A549 (cell line): ENCODE measurements at regions of chr15 and their contacts with region 1.

Region 1: GRCh38 chr15:99275525-99276128 is 24.3 kb downstream of the LRRC28 start:
- DNase-seq: no peak
- ATAC-seq: no peak
- H3K4me3 ChIP-seq: no peak overlapping the region
- H3K27ac ChIP-seq: no peak overlapping the region
- H3K4me1 ChIP-seq: no peaks in the 10 kb centered on the region
- CTCF ChIP-seq: no peak
- EP300 ChIP-seq: no peak
- POLR2A ChIP-seq: no peak
- RAD21 ChIP-seq: no peak

Region 2: GRCh38 chr15:99250494-99251435 is 24.9 kb before region 1 on chr15:
- CTCF ChIA-PET with region 1: interaction called, 21 read pairs
- POLR2A ChIA-PET with region 1: no interaction called
- DNase-seq: peak; percentile 92 to 99
- ATAC-seq: peak; percentile 91 to 96
- H3K4me3 ChIP-seq: peak overlapping the region; percentile 76
- H3K27ac ChIP-seq: peak overlapping the region; percentile 91
- H3K4me1 ChIP-seq: peaks cover 15% of the 10 kb centered on the region; the same call in 2 of the 3 replicates
- CTCF ChIP-seq: no peak
- EP300 ChIP-seq: no peak
- POLR2A ChIP-seq: peak; percentile 62
- RAD21 ChIP-seq: no peak

Region 3: DNA sequence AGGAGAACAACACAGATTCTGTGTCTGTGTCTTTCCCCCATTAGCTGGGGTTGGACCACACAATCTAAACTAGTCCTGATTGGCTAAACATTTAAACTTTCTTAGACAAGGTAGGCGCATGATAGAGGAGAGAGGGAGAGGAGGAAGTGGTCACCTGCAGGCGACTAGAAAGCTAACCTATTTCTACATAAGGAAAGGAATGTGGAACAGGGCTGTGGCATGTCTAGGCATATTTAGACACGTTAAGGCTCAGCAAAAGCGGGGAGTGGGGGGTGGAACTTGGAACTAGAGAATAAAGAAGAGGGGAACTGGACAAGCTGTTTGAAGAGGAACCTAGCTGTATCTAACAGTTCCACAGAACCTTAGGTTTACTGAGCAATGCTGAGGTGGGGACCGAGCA is 11.5 kb before region 1 on chr15:
- CTCF ChIA-PET with region 1: interaction called, 45 read pairs
- POLR2A ChIA-PET with region 1: no interaction called
- DNase-seq: no peak
- ATAC-seq: no peak
- H3K4me3 ChIP-seq: no peak overlapping the region
- H3K27ac ChIP-seq: no peak overlapping the region
- H3K4me1 ChIP-seq: no peaks in the 10 kb centered on the region
- CTCF ChIP-seq: no peak
- EP300 ChIP-seq: no peak
- POLR2A ChIP-seq: no peak
- RAD21 ChIP-seq: no peak

Region 4: GRCh38 chr15:99409097-99409473 is 133.5 kb after region 1 on chr15:
- CTCF ChIA-PET with region 1: interaction called, 16 read pairs
- POLR2A ChIA-PET with region 1: no interaction called
- DNase-seq: peak; percentile 75 to 76
- ATAC-seq: peak; percentile 93 to 95
- H3K4me3 ChIP-seq: no peak overlapping the region
- H3K27ac ChIP-seq: peak overlapping the region in 1 of 2 experiments; percentile 42; a peak in 2 of 6 replicates
- H3K4me1 ChIP-seq: peaks cover 17% of the 10 kb centered on the region
- CTCF ChIP-seq: peak; percentile 59
- EP300 ChIP-seq: no peak
- POLR2A ChIP-seq: no peak
- RAD21 ChIP-seq: peak; percentile 76 to 82

Region 5: DNA sequence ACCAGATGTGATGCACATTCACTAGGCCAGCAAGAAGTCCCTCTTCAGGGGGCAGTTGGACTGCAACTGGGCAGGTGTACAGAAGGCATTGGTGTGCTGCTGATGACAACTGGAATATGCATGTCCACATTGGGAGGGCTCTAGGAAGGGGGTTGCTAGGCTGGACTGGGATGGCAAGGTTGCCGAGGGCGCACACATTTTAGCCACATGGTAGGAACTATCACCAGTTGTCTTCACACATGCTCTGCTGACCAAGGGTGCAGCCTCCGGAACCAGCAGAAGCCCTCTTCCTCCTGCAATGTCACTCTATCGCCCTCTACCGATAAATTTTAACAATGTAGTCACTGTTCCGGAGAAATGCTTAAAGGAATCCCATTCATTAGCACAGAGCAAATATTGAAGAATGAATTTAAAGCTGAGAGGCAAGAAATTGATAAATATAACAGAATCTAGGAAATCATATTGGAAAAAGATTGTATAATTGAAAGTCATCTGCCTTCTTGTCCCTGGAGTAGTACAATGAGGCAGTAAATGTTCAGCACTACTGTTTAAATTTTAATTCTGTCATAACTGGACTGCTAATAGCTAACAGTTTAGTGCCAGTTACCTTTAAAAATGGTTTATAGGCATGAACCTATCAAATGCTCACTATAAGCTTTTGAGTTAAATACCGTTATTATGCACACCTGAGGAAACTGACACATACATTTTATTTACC is 480.2 kb after region 1 on chr15:
- CTCF ChIA-PET with region 1: interaction called, 92 read pairs
- POLR2A ChIA-PET with region 1: no interaction called
- DNase-seq: peak; percentile 71 to 84
- ATAC-seq: peak; percentile 85 to 96
- H3K4me3 ChIP-seq: no peak overlapping the region
- H3K27ac ChIP-seq: no peak overlapping the region
- H3K4me1 ChIP-seq: no peaks in the 10 kb centered on the region
- CTCF ChIP-seq: peak; percentile 90
- EP300 ChIP-seq: no peak
- POLR2A ChIP-seq: no peak
- RAD21 ChIP-seq: peak; percentile 89 to 94